HEK293 (cell line): ENCODE measurements at regions of chr15 and their contacts with region 1.

Region 1: DNA sequence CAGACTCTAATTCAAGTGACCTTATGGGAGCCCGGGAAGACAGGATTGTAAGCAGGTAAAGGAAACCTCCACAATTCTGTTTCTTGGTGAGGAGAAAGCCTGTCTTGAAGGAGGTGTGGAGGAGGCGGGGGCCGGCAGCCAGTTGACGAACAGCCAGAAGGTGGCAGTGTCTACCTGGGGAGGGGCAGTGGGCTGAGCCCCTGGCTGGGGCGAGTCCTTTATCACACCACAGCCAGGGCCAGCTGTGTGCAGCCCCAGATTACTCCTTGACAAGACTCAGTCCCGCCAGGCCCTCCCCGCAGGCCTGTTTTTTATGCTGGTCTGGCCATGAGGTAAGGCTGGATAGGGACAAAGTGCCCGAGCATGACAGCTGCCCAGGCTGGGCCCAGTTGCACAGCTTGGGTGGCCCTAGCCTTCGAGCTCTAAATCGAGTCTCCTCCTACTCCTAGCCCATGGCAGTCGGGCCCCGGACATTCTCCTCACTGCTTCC is 40.9 kb upstream of the IDH2 start:
- H3K4me3 ChIP-seq: no peak overlapping the region
- H3K27ac ChIP-seq: no peak overlapping the region
- H3K4me1 ChIP-seq: no peaks in the 10 kb centered on the region
- CTCF ChIP-seq: peak; percentile 94

Region 2: DNA sequence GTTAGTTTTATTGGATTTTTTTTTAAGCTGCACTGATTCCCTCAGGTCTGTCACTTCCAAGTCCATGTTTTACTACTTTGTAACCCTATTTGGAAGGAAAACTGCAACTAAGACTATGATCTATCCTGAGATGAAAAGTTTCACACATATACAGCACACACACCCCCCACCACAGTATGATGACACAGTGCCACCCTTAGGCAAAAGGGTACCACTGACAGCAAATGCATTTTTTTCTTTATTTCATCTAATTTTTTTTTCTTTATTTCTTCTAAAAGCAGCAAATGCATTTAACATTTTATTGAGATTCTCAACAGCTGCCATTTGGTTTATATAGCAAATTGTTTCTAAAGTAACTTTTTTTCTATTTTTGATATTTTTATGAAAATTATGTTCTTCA is 143.5 kb after region 1 on chr15:
- CTCF ChIA-PET with region 1: interaction called, 16 read pairs
- POLR2A ChIA-PET with region 1: no interaction called
- H3K4me3 ChIP-seq: no peak overlapping the region
- H3K27ac ChIP-seq: no peak overlapping the region
- H3K4me1 ChIP-seq: no peaks in the 10 kb centered on the region
- CTCF ChIP-seq: peak; percentile 78